Naive thymus-derived CD8-positive, alpha-beta T cell (primary cell): ENCODE measurements at regions of chr13 and their contacts with region 1.

Region 1: DNA sequence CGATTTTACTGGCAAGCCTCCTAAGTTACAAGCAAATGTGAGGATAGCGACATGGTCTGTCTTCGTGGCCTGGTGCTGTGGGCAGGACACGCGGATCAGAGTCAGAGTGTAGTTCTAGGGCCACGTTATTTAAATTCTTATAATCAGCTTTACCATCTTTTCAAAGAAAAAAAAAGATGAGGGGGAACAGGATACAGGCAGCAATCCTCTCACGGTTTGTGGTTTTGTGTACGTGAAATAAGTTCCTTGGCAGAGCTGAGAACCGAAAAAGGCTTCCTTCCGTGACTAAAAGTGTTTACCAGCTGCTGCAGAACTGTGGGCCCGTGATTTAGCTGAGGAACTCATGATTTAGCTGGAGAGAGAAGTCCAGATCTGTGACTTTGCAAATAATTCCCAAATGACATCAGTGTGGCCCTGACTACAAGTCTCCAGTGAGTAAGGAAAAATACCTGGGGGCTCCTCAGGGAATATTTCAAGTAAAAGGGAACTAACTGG is 27.2 kb downstream of the RCBTB2 start:
- DNase-seq: peak in 9 of 10 donors; percentile 30 to 86 (median 66)
- ATAC-seq: peak; percentile 96 to 97
- H3K4me3 Mint-ChIP-seq: peak overlapping the region; percentile 34 to 88 (median 78)
- H3K27ac Mint-ChIP-seq: peak overlapping the region; percentile 81 to 97 (median 93)
- H3K4me1 Mint-ChIP-seq: peaks cover 27 to 67% (median 38%) of the 10 kb centered on the region in 4 donors
- H3K27me3 Mint-ChIP-seq: no peaks in the 10 kb centered on the region

Region 2: GRCh38 chr13:48412881-48413351 is 92.7 kb before region 1 on chr13 and contains the start of gene LPAR6:
- POLR2A ChIA-PET with region 1: interaction called, 11 read pairs
- DNase-seq: peak in 3 of 10 donors; percentile 18 to 27 (median 24)
- ATAC-seq: peak; percentile 43 to 67
- H3K4me3 Mint-ChIP-seq: peak within 1 kb of the TSS; percentile 83 to 99 (median 92)
- H3K27ac Mint-ChIP-seq: peak within 1 kb of the TSS; percentile 92 to 99 (median 94)
- H3K4me1 Mint-ChIP-seq: peaks cover 12 to 46% (median 34%) of the 10 kb centered on the region in 4 donors
- H3K27me3 Mint-ChIP-seq: no peaks in the 10 kb centered on the region
- polyA plus RNA-seq, gene LPAR6: 7.3 to 10.4 (median 9.0) TPM

Region 3: GRCh38 chr13:48492470-48493065 is 13.1 kb before region 1 on chr13:
- POLR2A ChIA-PET with region 1: interaction called, 17 read pairs
- DNase-seq: peak; percentile 26 to 85 (median 67)
- ATAC-seq: peak; percentile 90 to 93
- H3K4me3 Mint-ChIP-seq: no peak overlapping the region
- H3K27ac Mint-ChIP-seq: no peak overlapping the region
- H3K4me1 Mint-ChIP-seq: peaks cover 15 to 31% (median 20%) of the 10 kb centered on the region in 4 donors
- H3K27me3 Mint-ChIP-seq: no peaks in the 10 kb centered on the region

Region 4: DNA sequence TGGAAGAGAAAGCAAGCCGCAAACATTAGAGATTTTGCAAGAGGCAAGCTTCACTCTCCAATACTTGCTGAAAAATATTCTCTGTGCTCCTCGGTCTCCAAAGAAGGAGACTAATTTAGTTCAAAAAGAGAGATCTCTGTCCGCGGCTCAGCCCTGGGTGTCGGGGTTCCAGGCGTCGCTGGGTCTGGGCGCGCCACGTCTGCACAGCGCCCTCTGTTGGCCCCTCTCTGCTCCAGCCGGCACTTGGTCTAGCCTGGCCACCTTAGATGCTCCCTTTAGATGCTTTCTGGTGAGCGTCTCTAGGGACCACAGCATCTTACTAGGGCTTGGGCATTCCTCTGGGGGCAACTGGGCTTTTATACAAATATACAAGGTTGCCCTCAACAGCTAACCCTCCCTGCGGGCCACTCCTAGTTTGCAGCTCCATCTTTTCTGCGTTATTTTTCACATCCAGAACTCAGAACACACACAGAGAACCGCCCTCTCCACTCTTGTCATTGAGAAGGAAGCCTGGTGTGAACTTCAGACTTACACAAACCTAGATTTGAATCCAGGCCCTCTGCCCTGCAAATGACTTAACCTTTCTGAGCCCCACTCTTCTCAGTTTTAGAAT is 226.4 kb after region 1 on chr13:
- POLR2A ChIA-PET with region 1: no interaction called
- DNase-seq: peak; percentile 8 to 70 (median 46)
- ATAC-seq: peak; percentile 88 to 94
- H3K4me3 Mint-ChIP-seq: peak overlapping the region; percentile 55 to 83 (median 70)
- H3K27ac Mint-ChIP-seq: no peak overlapping the region
- H3K4me1 Mint-ChIP-seq: peaks cover 2 to 10% (median 5%) of the 10 kb centered on the region in 4 donors
- H3K27me3 Mint-ChIP-seq: peaks cover 2 to 17% (median 4%) of the 10 kb centered on the region in 5 donors